ENCODE measurements at regions of chr7 and their contacts with region 1.

Region 1: GRCh38 chr7:149147072-149147751 is at the start of gene ZNF398:
- DNase-seq: peak; percentile 93
- CTCF ChIP-seq: peak; percentile 60

Region 2: DNA sequence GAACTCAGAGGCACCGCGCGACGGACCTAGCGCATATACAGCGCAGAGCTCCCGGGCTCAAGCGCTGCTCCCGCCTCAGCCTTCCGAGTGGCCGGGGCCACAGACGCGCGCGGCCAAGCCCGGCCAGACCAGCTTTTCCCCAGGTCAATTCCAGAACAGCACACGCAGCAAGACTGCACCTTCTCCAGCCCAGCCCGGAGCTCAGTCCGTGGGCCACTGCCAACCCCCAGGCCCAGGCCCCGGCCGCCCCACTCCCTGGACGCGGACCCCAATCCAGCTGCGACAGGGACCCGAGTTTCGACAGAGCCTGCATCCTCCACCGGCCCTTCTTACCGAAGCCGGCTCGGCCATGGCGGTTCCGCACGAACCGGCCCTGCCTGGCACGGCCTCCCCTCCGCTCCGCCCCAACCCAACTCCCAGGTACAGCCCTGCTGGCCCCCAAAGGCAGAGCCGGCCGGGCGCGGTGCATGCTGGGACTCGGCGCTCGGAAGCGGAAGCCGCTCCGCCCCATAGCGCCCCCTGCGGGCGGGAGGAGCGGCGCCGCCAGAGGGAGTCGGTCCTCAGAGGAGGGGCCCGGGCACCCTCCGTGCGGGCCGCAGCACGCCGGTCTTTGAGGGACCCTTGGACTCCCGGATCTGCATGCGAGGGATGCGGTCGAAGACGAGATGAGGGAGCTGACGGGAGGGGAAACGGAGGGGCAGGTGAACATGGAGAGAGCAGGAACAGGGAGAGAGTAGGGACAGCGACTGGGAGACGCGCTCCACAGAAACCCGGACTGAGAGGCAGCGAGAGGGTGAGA is 21.1 kb before region 1 on chr7 and contains the start of gene ZNF425:
- CTCF ChIA-PET with region 1: interaction called, 63 read pairs
- POLR2A ChIA-PET with region 1: interaction called, 4 read pairs
- DNase-seq: peak; percentile 98
- CTCF ChIP-seq: peak; percentile 93

Region 3: GRCh38 chr7:149133028-149133705 is 14.0 kb before region 1 on chr7:
- CTCF ChIA-PET with region 1: interaction called, 63 read pairs
- POLR2A ChIA-PET with region 1: interaction called, 3 read pairs
- DNase-seq: no peak
- CTCF ChIP-seq: no peak

Region 4: GRCh38 chr7:149166142-149166541 is 18.9 kb after region 1 on chr7:
- CTCF ChIA-PET with region 1: interaction called, 13 read pairs
- POLR2A ChIA-PET with region 1: no interaction called
- DNase-seq: no peak
- CTCF ChIP-seq: no peak

Region 5: GRCh38 chr7:149175150-149175549 is 27.9 kb after region 1 on chr7:
- CTCF ChIA-PET with region 1: interaction called, 11 read pairs
- POLR2A ChIA-PET with region 1: no interaction called
- DNase-seq: no peak
- CTCF ChIP-seq: no peak

Measured in GM10248 (cell line).